Endothelial cell of umbilical vein (primary cell): ENCODE measurements at regions of chr12 and their contacts with region 1.

Region 1: GRCh38 chr12:122471324-122472226 is 29.2 kb downstream of the ZCCHC8 start:
- DNase-seq: peak; percentile 80
- H3K4me3 ChIP-seq: no peak overlapping the region
- H3K27ac ChIP-seq: peak overlapping the region; percentile 35
- H3K4me1 ChIP-seq: peaks cover 3% of the 10 kb centered on the region
- H3K27me3 ChIP-seq: no peaks in the 10 kb centered on the region
- CTCF ChIP-seq: peak; percentile 46 to 62
- POLR2A ChIP-seq: no peak

Region 2: DNA sequence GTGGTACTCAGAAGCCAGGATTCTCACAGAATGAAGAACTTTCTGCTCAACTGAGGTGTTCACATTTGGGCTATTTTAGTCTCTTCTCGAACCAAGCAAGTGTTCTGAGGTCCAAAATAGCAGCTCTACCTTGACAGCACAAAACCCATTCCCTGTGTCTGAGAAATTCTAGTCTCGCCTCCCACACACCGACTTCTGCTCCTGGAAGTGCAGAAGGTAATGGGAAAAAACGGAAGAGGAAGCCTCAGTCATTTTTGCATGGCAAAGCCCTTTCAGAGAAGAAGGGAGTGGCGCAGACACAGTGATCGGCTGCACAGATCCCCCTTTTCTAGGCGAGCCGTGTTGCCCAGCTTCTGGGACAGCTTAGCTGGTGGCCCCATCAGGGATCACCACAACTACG is 174.1 kb before region 1 on chr12:
- CTCF ChIA-PET with region 1: no interaction called
- POLR2A ChIA-PET with region 1: no interaction called
- dilution Hi-C with region 1: no loop called
- intact Hi-C with region 1: no loop called
- DNase-seq: no peak
- H3K4me3 ChIP-seq: no peak overlapping the region
- H3K27ac ChIP-seq: no peak overlapping the region
- H3K4me1 ChIP-seq: no peaks in the 10 kb centered on the region
- H3K27me3 ChIP-seq: no peaks in the 10 kb centered on the region
- CTCF ChIP-seq: no peak
- POLR2A ChIP-seq: no peak

Region 3: GRCh38 chr12:122366685-122367475 is 104.7 kb before region 1 on chr12:
- CTCF ChIA-PET with region 1: interaction called, 19 read pairs
- POLR2A ChIA-PET with region 1: no interaction called
- dilution Hi-C with region 1: no loop called
- intact Hi-C with region 1: no loop called
- DNase-seq: peak; percentile 73
- H3K4me3 ChIP-seq: no peak overlapping the region
- H3K27ac ChIP-seq: peak overlapping the region; percentile 57
- H3K4me1 ChIP-seq: peaks cover 31% of the 10 kb centered on the region
- H3K27me3 ChIP-seq: no peaks in the 10 kb centered on the region
- CTCF ChIP-seq: no peak
- POLR2A ChIP-seq: no peak

Region 4: GRCh38 chr12:122406701-122407164 is 64.8 kb before region 1 on chr12:
- CTCF ChIA-PET with region 1: interaction called, 428 read pairs
- POLR2A ChIA-PET with region 1: no interaction called
- dilution Hi-C with region 1: no loop called
- intact Hi-C with region 1: no loop called
- DNase-seq: no peak
- H3K4me3 ChIP-seq: no peak overlapping the region
- H3K27ac ChIP-seq: no peak overlapping the region
- H3K4me1 ChIP-seq: no peaks in the 10 kb centered on the region
- H3K27me3 ChIP-seq: no peaks in the 10 kb centered on the region
- CTCF ChIP-seq: no peak
- POLR2A ChIP-seq: no peak

Region 5: GRCh38 chr12:122449353-122449752 is 22.2 kb before region 1 on chr12:
- CTCF ChIA-PET with region 1: interaction called, 11 read pairs
- POLR2A ChIA-PET with region 1: no interaction called
- dilution Hi-C with region 1: no loop called
- intact Hi-C with region 1: no loop called
- DNase-seq: peak; percentile 38
- H3K4me3 ChIP-seq: no peak overlapping the region
- H3K27ac ChIP-seq: no peak overlapping the region
- H3K4me1 ChIP-seq: no peaks in the 10 kb centered on the region
- H3K27me3 ChIP-seq: no peaks in the 10 kb centered on the region
- CTCF ChIP-seq: no peak
- POLR2A ChIP-seq: no peak

Region 6: GRCh38 chr12:122491991-122492390 is 20.4 kb after region 1 on chr12:
- CTCF ChIA-PET with region 1: interaction called, 16 read pairs
- POLR2A ChIA-PET with region 1: no interaction called
- dilution Hi-C with region 1: no loop called
- intact Hi-C with region 1: no loop called
- DNase-seq: no peak
- H3K4me3 ChIP-seq: no peak overlapping the region
- H3K27ac ChIP-seq: no peak overlapping the region
- H3K4me1 ChIP-seq: no peaks in the 10 kb centered on the region
- H3K27me3 ChIP-seq: no peaks in the 10 kb centered on the region
- CTCF ChIP-seq: no peak
- POLR2A ChIP-seq: no peak